Mammary epithelial cell (primary cell): ENCODE measurements at regions of chr20 and their contacts with region 1.

Region 1: DNA sequence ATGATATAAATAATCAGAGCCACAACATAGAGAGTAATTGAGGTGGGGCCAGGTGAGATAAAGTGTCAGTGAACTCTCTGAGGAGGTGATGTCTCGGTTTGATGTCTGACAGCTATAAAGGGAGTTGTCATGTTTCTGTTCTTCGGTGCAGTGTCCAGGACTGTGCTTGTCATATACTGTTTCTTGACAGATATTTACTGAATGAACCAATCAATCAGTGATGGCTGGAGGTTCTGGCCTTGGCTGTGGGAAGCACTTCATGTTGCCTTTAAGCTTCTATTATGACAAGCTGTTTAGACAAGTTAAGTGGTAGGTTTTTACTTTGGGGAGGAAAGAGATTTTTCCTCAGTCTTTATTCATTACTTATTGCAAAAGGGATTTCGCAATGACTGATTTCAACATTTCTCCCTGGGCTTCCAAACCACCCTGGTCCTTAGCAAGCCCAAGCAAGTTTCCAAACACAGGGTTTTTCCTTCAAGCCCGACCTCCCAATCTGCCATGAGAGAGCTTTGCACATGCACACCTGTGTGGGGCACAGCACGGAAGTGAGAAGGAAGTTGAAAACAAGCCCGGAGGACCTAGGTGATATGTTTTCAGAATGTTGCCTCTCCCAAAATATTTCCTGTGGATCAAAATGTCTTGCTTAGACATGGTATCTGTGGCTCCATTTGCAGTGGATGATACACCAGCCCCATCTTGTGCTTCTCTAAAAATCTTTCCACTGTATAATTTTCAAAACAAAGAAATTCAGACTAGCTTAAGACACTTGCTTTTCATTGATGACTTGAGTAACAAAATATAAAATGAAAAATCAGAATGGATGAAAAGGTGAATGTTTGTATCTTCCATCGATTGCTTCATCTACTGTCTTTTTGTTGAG is 567.3 kb upstream of the BTBD3 start:
- DNase-seq: peak; percentile 98
- H3K4me3 ChIP-seq: no peak overlapping the region
- H3K27ac ChIP-seq: peak overlapping the region; percentile 59
- H3K4me1 ChIP-seq: peaks cover 25% of the 10 kb centered on the region
- H3K27me3 ChIP-seq: no peaks in the 10 kb centered on the region
- CTCF ChIP-seq: peak; percentile 28 to 59

Region 2: GRCh38 chr20:10731190-10731965 is 619.0 kb before region 1 on chr20:
- CTCF ChIA-PET with region 1: no interaction called
- dilution Hi-C with region 1: no loop called
- in situ Hi-C with region 1: no loop called
- intact Hi-C with region 1: loop called (anchors 5 kb)
- DNase-seq: peak; percentile 64
- H3K4me3 ChIP-seq: no peak overlapping the region
- H3K27ac ChIP-seq: peak overlapping the region; percentile 64
- H3K4me1 ChIP-seq: peaks cover 47% of the 10 kb centered on the region
- H3K27me3 ChIP-seq: no peaks in the 10 kb centered on the region
- CTCF ChIP-seq: no peak

Region 3: GRCh38 chr20:11140359-11140758 is 210.0 kb before region 1 on chr20:
- CTCF ChIA-PET with region 1: no interaction called
- dilution Hi-C with region 1: no loop called
- in situ Hi-C with region 1: no loop called
- intact Hi-C with region 1: loop called (anchors 1 kb)
- DNase-seq: peak; percentile 98
- H3K4me3 ChIP-seq: no peak overlapping the region
- H3K27ac ChIP-seq: peak overlapping the region; percentile 74
- H3K4me1 ChIP-seq: peaks cover 21% of the 10 kb centered on the region
- H3K27me3 ChIP-seq: no peaks in the 10 kb centered on the region
- CTCF ChIP-seq: peak in 1 of 2 donors; percentile 42

Region 4: DNA sequence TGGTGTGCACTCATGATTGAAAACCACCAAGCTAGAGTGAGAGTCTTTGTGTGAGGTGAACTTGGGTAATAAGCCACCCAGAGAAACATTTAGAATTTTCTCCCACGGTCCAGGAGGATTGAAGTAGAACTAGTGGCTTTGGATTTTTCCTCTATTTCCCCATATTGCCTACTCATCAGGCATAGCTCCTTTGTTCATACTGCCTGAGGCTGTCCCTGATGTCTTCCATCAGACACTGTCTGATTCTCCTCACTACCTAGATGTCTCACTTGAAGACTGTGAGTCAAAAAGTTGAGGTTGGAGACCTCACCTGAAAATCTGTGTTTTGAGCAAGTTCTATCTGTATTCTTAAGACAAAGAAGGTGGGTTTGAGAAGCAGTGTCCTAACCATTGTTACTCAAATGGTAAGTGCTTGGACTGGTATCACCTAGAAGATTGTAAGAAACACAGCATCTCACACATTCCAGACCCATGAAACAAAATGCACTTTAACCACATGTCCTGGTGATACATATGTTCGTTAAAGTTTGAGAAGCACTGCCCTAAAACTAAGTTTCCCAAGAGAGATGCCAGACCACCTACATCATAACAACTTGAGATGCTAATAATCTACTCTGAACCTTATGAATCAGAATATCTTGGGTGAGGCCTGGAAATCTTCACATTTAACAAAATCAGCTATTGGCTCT is 43.9 kb after region 1 on chr20:
- CTCF ChIA-PET with region 1: interaction called, 11 read pairs
- dilution Hi-C with region 1: no loop called
- in situ Hi-C with region 1: no loop called
- intact Hi-C with region 1: no loop called
- DNase-seq: peak; percentile 97
- H3K4me3 ChIP-seq: no peak overlapping the region
- H3K27ac ChIP-seq: peak overlapping the region; percentile 95
- H3K4me1 ChIP-seq: peaks cover 31% of the 10 kb centered on the region
- H3K27me3 ChIP-seq: no peaks in the 10 kb centered on the region
- CTCF ChIP-seq: no peak